ENCODE measurements at regions of chr10 and their contacts with region 1.

Region 1: DNA sequence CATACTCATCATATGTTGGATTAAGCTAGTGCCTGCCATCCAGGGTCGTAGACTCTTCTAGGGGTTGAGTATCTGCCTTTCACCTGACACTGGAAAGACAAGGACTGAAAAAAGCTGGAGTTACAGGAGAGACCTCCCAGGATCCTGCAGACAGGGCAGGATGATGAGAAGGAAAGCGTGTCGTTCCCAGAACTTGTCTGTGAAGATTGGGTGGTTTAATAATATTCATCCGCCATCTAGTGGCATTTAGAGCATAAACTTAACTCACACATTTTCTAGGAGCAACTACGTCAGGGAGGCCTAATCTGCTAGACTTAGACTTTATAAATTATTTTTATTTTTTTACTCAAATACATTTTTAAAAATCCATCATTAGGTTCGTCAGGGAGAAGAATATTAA is 59.6 kb downstream of the ADRB1 start:
- DNase-seq: no peak
- H3K4me3 ChIP-seq: no peak overlapping the region
- H3K27ac ChIP-seq: no peak overlapping the region
- H3K4me1 ChIP-seq: peaks cover 0 to 3% of the 10 kb centered on the region in 2 donors
- H3K27me3 ChIP-seq: no peaks in the 10 kb centered on the region
- CTCF ChIP-seq: peak; percentile 40 to 63 (median 41)

Region 2: GRCh38 chr10:113704637-113705343 is 398.5 kb before region 1 on chr10:
- intact Hi-C with region 1: loop called (anchors 5 kb)
- DNase-seq: no peak
- H3K4me3 ChIP-seq: no peak overlapping the region
- H3K27ac ChIP-seq: no peak overlapping the region
- H3K4me1 ChIP-seq: peaks cover 0 to 1% of the 10 kb centered on the region in 2 donors
- H3K27me3 ChIP-seq: no peaks in the 10 kb centered on the region
- CTCF ChIP-seq: peak; percentile 37 to 58 (median 39)

Region 3: DNA sequence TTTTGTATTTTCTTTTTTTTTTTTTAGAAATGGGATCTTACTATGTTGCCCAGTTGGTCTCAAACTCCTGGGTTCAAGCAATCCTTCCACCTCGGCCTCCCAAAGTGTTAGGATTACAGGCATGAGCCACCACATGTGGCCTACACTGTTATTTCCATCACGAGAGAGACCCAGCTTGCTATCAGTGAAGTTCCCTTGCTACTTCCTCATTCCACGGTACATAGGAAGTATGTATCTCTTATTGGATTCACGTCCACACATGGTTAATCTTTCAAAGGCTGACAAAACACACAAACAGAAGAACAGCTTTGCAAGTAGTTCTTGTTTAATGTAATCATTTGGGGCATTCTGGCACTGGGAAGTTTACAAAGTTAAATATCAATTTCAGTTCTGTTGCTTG is 300.3 kb before region 1 on chr10:
- intact Hi-C with region 1: loop called (anchors 2 kb)
- DNase-seq: no peak
- H3K4me3 ChIP-seq: no peak overlapping the region
- H3K27ac ChIP-seq: no peak overlapping the region
- H3K4me1 ChIP-seq: no peaks in the 10 kb centered on the region
- H3K27me3 ChIP-seq: no peaks in the 10 kb centered on the region
- CTCF ChIP-seq: no peak

Region 4: GRCh38 chr10:114053946-114054345 is 49.3 kb before region 1 on chr10:
- intact Hi-C with region 1: no loop called
- DNase-seq: no peak
- H3K4me3 ChIP-seq: no peak overlapping the region
- H3K27ac ChIP-seq: no peak overlapping the region
- H3K4me1 ChIP-seq: no peaks in the 10 kb centered on the region
- H3K27me3 ChIP-seq: no peaks in the 10 kb centered on the region
- CTCF ChIP-seq: no peak